ENCODE measurements at regions of chr4 and their contacts with region 1.

Region 1: GRCh38 chr4:105236202-105236915 is 89.7 kb downstream of the TET2 start:
- DNase-seq: no peak
- ATAC-seq: no peak

Region 2: DNA sequence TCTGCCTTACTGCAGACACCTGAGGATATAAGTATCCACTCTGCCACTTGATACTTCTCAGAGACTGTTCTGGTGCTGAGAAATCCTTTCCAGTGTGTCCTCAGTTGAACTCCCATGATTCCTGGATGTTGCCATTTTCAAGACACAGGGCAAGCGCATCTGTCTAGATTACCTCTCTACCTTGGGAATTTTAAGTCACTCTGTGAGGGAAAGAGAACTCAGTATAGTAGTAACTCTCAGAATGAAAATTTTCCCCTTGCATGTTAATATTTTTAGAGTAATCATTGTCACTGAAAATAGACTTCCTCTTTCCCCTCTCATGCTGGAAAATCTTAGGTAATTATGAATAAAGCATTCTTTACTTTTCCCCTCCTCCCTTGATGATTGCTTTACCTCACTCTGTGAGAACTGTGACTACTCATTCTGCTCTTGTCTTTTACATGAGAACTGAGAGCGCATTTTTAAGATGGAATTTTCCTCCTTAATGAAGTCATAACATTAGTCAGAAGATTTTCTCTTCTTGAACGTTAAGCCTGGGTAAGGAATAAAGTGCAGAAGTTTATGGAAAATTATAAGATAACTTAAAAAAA is 44.6 kb before region 1 on chr4:
- intact Hi-C with region 1: loop called (anchors 5 kb)
- DNase-seq: no peak
- ATAC-seq: peak; percentile 60

Region 3: DNA sequence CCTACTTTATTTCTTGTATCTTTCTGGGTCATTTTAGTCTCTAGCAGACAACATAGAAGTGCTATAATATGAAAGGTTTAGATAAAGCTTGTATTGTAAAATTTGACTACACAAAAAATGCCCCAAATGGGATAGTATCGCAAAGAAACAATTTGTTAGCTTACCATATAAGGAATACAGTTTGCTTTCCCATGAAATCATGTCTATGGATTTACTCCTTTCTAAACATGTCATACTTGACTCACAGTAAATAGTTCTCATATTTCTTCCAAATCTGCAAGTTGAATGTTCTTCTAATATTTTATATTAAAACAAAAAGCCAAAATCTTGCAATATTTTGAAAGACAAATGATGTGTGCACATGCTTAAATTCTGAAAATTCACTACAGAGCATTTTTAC is 133.6 kb after region 1 on chr4:
- intact Hi-C with region 1: no loop called
- DNase-seq: no peak
- ATAC-seq: no peak